ENCODE measurements at regions of chr12 and their contacts with region 1.

Region 1: DNA sequence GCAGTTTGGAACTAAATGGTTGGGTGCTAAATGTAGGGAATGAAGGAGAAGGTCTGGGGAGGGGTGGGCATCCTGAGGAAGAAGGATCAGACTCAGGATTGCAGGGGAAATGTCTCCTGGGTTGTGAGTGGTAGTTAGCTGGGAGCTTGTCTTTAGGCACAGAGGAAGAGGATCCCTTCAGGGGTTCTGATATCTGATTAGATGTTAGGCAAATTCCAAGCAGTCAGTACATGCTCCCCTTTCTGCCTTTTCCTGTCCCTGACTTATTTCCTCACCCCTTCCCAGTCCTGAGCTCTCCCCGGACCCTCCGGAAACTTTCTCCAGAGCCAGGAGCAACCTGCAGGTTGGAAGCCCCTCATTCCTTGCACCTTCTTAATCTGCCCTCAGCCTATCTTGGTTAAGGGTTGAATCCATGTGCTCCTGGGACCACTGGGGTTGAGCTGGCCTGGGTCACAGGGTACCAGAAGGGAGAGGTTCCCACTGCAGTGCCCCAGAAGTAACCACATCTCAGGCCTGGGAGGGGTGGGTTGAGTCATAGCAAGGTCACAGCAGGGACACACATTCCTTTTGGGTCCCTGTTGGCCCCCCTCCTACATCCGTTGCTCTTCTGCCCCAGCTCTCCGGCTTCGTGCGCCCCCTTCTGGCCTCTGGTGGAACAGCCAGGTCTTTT is 1.6 kb downstream of the IGFBP6 start:
- DNase-seq: peak; percentile 92
- H3K4me3 Mint-ChIP-seq: peak overlapping the region; percentile 30
- H3K27ac Mint-ChIP-seq: peak overlapping the region; percentile 34
- H3K4me1 Mint-ChIP-seq: peaks cover 55% of the 10 kb centered on the region
- H3K27me3 Mint-ChIP-seq: peaks cover 52% of the 10 kb centered on the region

Region 2: GRCh38 chr12:53039851-53040250 is 59.3 kb before region 1 on chr12:
- CTCF ChIA-PET with region 1: interaction called, 13 read pairs
- DNase-seq: no peak
- H3K4me3 Mint-ChIP-seq: no peak overlapping the region
- H3K27ac Mint-ChIP-seq: no peak overlapping the region
- H3K4me1 Mint-ChIP-seq: peaks cover 30% of the 10 kb centered on the region
- H3K27me3 Mint-ChIP-seq: peaks cover 10% of the 10 kb centered on the region

Region 3: GRCh38 chr12:53079226-53080117 is 19.6 kb before region 1 on chr12 and contains the start of gene SPRYD3:
- CTCF ChIA-PET with region 1: interaction called, 250 read pairs
- DNase-seq: peak; percentile 98
- H3K4me3 Mint-ChIP-seq: peak within 1 kb of the TSS; percentile 92
- H3K27ac Mint-ChIP-seq: peak within 1 kb of the TSS; percentile 92
- H3K4me1 Mint-ChIP-seq: peaks cover 29% of the 10 kb centered on the region
- H3K27me3 Mint-ChIP-seq: no peaks in the 10 kb centered on the region

Region 4: GRCh38 chr12:53145383-53146260 is 46.5 kb after region 1 on chr12:
- CTCF ChIA-PET with region 1: no interaction called
- DNase-seq: no peak
- H3K4me3 Mint-ChIP-seq: no peak overlapping the region
- H3K27ac Mint-ChIP-seq: no peak overlapping the region
- H3K4me1 Mint-ChIP-seq: no peaks in the 10 kb centered on the region
- H3K27me3 Mint-ChIP-seq: peaks cover 9% of the 10 kb centered on the region